ENCODE measurements at regions of chr2 and their contacts with region 1.

Region 1: DNA sequence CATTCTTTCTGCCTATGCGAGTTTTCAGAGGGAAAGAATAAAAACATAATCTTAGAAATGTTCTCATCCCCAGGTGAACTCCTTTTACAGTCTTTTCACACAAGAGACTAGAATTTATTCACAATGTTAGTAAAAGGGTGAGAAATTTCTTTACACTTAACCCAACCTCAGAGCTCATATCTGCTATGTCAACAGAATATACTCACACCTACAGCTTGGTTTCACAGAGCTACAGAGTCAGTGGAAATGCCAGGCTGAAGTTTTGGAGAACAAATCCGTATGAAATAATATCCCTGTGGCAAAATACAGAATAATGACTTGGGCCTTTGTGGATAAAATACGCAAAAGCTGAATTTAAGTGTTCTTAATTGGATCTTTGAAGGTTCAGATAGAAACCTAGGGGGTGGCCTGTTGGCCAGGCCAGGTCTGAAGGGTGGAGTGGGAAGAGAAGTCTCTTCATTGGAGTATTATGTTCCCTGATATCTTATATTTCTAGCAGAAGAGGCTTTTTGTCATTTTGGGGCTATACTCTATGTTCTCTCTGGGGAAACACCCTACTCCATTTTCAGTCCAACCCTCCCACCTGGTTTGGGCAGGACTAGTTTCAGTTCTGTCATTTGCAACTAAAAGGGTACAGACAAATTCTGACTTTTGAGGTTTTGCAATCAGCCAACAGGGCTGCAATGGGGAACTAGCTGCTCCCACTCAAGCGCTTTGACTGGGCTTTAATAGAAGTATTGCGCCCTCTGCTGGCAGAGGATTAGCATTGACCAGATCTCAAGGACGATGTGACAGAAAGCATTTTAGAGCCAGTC is 25.7 kb downstream of the FBXO48 start:
- DNase-seq: peak; percentile 79
- ATAC-seq: peak; percentile 96
- H3K4me3 Mint-ChIP-seq: no peak overlapping the region
- H3K27ac Mint-ChIP-seq: no peak overlapping the region
- H3K4me1 Mint-ChIP-seq: peaks cover 9% of the 10 kb centered on the region
- H3K27me3 Mint-ChIP-seq: no peaks in the 10 kb centered on the region
- CTCF ChIP-seq: peak; percentile 93

Region 2: DNA sequence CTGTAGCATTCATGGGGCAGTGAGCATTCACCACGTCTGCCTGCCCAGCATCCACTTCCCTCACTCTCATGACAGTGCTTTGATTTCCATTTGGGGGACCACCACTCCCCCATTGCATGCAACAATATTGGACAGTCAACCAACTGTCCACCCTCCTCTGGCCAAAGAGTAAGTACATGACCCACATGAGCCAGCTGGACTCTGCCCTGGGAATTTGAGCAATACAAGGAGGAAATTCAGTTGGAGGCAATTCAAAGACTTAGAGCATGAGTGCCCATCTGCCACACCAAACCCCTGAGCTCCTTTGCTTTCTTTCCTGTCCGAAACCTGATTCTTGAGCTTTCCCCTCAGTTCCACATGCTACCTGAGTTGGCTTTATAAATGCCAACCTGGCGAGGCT is 325.4 kb before region 1 on chr2:
- CTCF ChIA-PET with region 1: no interaction called
- POLR2A ChIA-PET with region 1: no interaction called
- DNase-seq: no peak
- ATAC-seq: no peak
- H3K4me3 Mint-ChIP-seq: no peak overlapping the region
- H3K27ac Mint-ChIP-seq: no peak overlapping the region
- H3K4me1 Mint-ChIP-seq: no peaks in the 10 kb centered on the region
- H3K27me3 Mint-ChIP-seq: no peaks in the 10 kb centered on the region
- CTCF ChIP-seq: no peak

Region 3: GRCh38 chr2:68282811-68283418 is 158.5 kb before region 1 on chr2:
- CTCF ChIA-PET with region 1: interaction called, 10 read pairs
- POLR2A ChIA-PET with region 1: no interaction called
- DNase-seq: no peak
- ATAC-seq: peak; percentile 52; the same call in 1 of the 2 replicates
- H3K4me3 Mint-ChIP-seq: no peak overlapping the region
- H3K27ac Mint-ChIP-seq: no peak overlapping the region
- H3K4me1 Mint-ChIP-seq: peaks cover 2% of the 10 kb centered on the region; the same call in 1 of the 2 replicates
- H3K27me3 Mint-ChIP-seq: peaks cover 4% of the 10 kb centered on the region
- CTCF ChIP-seq: peak; percentile 17; the same call in 1 of the 2 replicates

Region 4: GRCh38 chr2:68295516-68295915 is 145.9 kb before region 1 on chr2:
- CTCF ChIA-PET with region 1: interaction called, 13 read pairs
- POLR2A ChIA-PET with region 1: interaction called, 3 read pairs
- DNase-seq: no peak
- ATAC-seq: no peak
- H3K4me3 Mint-ChIP-seq: no peak overlapping the region
- H3K27ac Mint-ChIP-seq: no peak overlapping the region
- H3K4me1 Mint-ChIP-seq: no peaks in the 10 kb centered on the region
- H3K27me3 Mint-ChIP-seq: peaks cover 7% of the 10 kb centered on the region; the same call in 1 of the 2 replicates
- CTCF ChIP-seq: no peak

Region 5: GRCh38 chr2:68319398-68320117 is 121.8 kb before region 1 on chr2 and contains the start of gene CNRIP1:
- CTCF ChIA-PET with region 1: interaction called, 15 read pairs
- POLR2A ChIA-PET with region 1: interaction called, 5 read pairs
- DNase-seq: peak; percentile 64
- ATAC-seq: peak; percentile 72
- H3K4me3 Mint-ChIP-seq: peak within 1 kb of the TSS; percentile 78
- H3K27ac Mint-ChIP-seq: no peak within 1 kb of the TSS
- H3K4me1 Mint-ChIP-seq: peaks cover 12% of the 10 kb centered on the region
- H3K27me3 Mint-ChIP-seq: peaks cover 68% of the 10 kb centered on the region
- CTCF ChIP-seq: no peak
- total RNA-seq, gene CNRIP1: 1.3 to 1.6 TPM (median 1.4 TPM) in 3 replicates

Region 6: DNA sequence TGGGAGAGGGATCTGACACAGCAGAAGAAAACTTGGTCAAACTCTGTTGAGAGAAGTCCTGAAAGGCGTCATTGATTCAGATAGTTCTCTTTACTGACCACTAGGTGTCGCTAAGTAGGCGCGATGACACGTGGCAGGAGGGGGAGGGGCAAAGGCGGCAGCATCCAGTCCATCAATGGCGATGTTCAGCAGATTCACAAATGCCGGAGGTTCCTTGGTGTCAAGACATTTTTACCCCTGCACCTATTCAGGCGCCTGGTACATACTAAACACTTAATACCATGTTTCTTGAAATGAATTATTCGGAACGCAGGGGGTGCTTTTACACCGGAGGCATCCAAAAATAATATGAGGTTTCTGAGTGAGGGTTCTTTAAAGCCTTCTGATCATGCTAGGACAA is 79.3 kb before region 1 on chr2:
- CTCF ChIA-PET with region 1: interaction called, 22 read pairs
- POLR2A ChIA-PET with region 1: no interaction called
- DNase-seq: peak; percentile 65
- ATAC-seq: peak; percentile 54
- H3K4me3 Mint-ChIP-seq: no peak overlapping the region
- H3K27ac Mint-ChIP-seq: no peak overlapping the region
- H3K4me1 Mint-ChIP-seq: peaks cover 13% of the 10 kb centered on the region
- H3K27me3 Mint-ChIP-seq: peaks cover 29% of the 10 kb centered on the region
- CTCF ChIP-seq: peak; percentile 79

Measured in WTC11 (cell line).